ENCODE measurements at regions of chr2 and their contacts with region 1.

Region 1: DNA sequence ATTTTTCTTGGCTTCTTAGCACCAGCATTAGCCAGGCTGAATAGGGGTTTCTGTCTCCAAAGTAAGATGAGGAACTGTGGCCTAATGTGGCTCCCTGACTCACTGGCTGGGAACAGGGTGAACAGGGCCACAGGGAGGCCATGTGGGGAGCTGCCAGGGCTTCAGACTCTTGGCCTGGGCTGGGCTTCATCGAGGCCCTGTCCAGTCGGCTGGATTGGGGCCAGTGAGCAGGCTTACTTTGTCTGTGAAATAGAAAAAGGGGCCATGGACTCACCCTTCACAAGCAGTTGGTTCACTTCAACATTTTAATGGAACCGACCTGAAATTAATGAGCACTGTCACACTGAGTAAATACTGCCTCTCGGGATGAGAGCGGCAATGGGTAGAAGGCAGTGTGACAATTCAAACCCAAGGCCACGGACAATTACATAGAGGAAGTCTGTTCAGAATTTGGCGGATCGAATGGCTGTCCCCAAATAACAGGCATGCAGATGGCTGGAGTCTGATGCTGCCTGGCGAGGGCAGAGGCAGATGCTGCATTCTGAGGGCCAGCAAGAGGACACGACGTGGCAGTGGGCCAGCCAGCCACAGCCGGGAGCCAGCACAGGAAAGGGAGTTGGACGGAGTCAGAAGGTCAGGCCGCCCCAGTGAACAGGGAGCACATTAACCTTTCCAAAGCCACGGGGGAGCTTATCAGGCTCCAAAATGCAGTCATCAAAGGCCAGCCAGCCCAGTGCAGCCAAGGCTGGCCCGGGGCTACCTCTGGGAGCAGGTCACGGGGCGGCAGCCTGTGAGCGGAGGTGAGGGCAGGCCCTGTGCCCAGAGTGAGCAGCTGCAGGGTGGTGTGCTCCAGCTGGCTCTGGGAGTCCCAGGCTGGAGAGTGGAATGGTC is 146.6 kb upstream of the REV1 start:
- DNase-seq: no peak
- ATAC-seq: peak; percentile 63
- H3K4me3 ChIP-seq: no peak overlapping the region
- H3K27ac ChIP-seq: no peak overlapping the region
- H3K4me1 ChIP-seq: no peaks in the 10 kb centered on the region
- H3K27me3 ChIP-seq: no peaks in the 10 kb centered on the region
- CTCF ChIP-seq: no peak

Region 2: DNA sequence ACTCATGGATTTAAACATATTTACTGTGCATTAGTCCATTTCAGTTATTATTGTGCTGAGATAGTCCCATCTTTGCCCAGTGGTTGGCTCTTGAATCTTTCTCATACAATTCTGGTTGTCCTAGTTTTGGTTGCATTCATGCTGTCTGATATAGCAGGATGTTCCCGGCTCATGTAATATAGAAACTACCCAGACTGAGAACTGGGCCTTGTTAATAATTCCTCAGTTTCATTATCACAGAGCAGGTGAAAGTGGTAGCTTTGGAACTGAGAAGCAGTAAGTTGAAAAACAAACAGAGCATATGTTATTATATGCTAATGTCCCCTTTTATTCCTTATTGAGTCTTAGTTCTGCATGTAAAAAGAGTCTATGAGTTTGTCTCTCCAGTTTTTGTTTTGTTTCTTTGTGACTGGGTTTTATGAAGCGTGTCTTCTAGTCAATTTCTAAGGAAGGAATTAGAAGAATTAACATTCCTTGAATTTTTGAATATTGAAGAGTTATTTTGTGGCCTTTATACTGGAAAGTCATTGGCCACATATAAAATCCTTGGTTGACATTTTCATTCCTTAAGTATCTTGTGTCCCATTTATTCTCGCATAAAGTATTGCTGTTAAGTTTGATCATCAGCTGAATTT is 255.9 kb before region 1 on chr2:
- CTCF ChIA-PET with region 1: no interaction called
- POLR2A ChIA-PET with region 1: no interaction called
- in situ Hi-C with region 1: no loop called
- intact Hi-C with region 1: no loop called
- DNase-seq: no peak
- ATAC-seq: no peak
- H3K4me3 ChIP-seq: no peak overlapping the region
- H3K27ac ChIP-seq: no peak overlapping the region
- H3K4me1 ChIP-seq: no peaks in the 10 kb centered on the region
- H3K27me3 ChIP-seq: no peaks in the 10 kb centered on the region
- CTCF ChIP-seq: no peak

Region 3: DNA sequence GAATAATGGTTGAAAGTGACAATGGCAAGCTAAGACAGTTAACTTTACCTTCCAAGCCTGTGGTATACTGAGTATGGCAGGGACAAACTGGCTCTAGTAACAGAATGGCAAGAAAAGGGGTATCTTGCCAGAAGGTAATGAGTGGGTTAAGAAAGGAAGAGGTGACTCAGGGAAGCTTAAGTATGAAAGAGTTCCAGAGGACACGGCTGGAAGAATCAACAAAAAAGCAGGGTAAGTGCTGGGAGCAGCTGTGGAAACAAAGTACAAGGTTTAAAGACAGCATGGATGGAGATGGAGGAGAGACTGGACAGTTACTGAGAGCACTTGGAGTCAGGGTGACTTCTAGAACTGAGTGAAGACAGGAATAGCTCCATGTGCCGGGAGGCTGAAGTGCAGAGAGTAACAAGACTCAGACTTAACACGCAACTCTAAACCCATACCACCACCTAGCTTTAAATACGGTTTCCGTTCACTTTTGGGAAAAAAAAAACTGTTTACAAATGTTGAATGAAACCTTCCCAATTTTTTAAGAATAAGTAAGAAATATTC is 215.6 kb before region 1 on chr2:
- CTCF ChIA-PET with region 1: no interaction called
- POLR2A ChIA-PET with region 1: no interaction called
- in situ Hi-C with region 1: no loop called
- intact Hi-C with region 1: no loop called
- DNase-seq: no peak
- ATAC-seq: no peak
- H3K4me3 ChIP-seq: no peak overlapping the region
- H3K27ac ChIP-seq: no peak overlapping the region
- H3K4me1 ChIP-seq: no peaks in the 10 kb centered on the region
- H3K27me3 ChIP-seq: no peaks in the 10 kb centered on the region
- CTCF ChIP-seq: no peak

Region 4: DNA sequence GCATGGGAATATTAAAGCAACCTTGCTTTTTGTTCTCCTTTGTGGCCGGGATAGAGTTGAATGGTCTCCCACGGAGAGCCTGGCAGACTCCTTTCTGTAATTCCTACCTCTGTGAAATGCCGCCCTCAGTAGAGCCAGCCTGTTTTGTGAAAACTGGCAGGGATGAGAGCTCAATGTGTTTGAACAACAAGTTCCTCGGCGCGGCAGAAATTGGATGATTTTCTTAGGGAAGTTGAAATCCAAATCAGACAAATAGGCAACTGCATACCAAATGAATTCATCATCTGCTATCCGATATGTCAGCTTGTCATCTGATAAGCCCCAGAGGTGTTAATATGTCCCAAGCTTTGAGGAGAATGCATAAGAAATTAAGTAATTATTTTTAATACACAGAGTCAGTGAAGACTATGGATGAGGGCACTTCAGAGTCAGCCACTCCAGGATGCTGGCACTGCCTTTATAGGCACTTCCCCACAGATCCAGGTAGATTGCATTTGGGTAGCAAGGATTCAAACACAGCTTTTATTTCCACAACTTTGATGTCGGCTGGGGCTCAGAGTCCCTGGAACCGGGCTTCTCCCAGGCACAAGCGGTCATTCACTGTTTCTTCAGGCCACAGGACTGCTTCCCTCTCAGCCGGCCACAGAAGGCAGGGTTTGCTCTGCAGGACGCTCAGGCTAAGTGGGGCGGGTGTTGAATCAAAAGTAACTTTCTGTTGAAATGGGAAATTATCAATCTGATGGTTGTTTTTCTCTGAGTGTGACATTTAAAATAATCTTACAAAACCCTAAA is 63.8 kb before region 1 on chr2:
- CTCF ChIA-PET with region 1: no interaction called
- POLR2A ChIA-PET with region 1: no interaction called
- in situ Hi-C with region 1: no loop called
- intact Hi-C with region 1: no loop called
- DNase-seq: no peak
- ATAC-seq: no peak
- H3K4me3 ChIP-seq: no peak overlapping the region
- H3K27ac ChIP-seq: no peak overlapping the region
- H3K4me1 ChIP-seq: no peaks in the 10 kb centered on the region
- H3K27me3 ChIP-seq: no peaks in the 10 kb centered on the region; the same call in 1 of the 2 replicates
- CTCF ChIP-seq: no peak

Region 5: GRCh38 chr2:100359576-100359975 is 723.2 kb after region 1 on chr2:
- CTCF ChIA-PET with region 1: no interaction called
- POLR2A ChIA-PET with region 1: interaction called, 16 read pairs
- in situ Hi-C with region 1: no loop called
- intact Hi-C with region 1: no loop called
- DNase-seq: no peak
- ATAC-seq: no peak
- H3K4me3 ChIP-seq: no peak overlapping the region
- H3K27ac ChIP-seq: no peak overlapping the region
- H3K4me1 ChIP-seq: no peaks in the 10 kb centered on the region
- H3K27me3 ChIP-seq: no peaks in the 10 kb centered on the region
- CTCF ChIP-seq: no peak